ENCODE measurements at regions of chr7 and their contacts with region 1.

Region 1: GRCh38 chr7:152759949-152760853 is 649 bp downstream of the ACTR3B start:
- DNase-seq: peak; percentile 66
- H3K4me3 ChIP-seq: peak overlapping the region; percentile 90 to 98 (median 94)
- H3K27ac ChIP-seq: peak overlapping the region; percentile 88 to 96 (median 94)
- H3K4me1 ChIP-seq: peaks cover 0 to 16% (median 13%) of the 10 kb centered on the region in 4 donors
- H3K27me3 ChIP-seq: no peaks in the 10 kb centered on the region
- CTCF ChIP-seq: no peak
- EP300 ChIP-seq: no peak
- POLR2A ChIP-seq: no peak

Region 2: GRCh38 chr7:152025077-152025936 is 734.9 kb before region 1 on chr7 and contains the start of gene GALNT11:
- intact Hi-C with region 1: loop called (anchors 5 kb)
- DNase-seq: peak; percentile 93
- H3K4me3 ChIP-seq: peak within 1 kb of the TSS; percentile 63 to 86 (median 82)
- H3K27ac ChIP-seq: peak within 1 kb of the TSS; percentile 89 to 94 (median 92)
- H3K4me1 ChIP-seq: peaks cover 0 to 20% (median 13%) of the 10 kb centered on the region in 4 donors
- H3K27me3 ChIP-seq: no peaks in the 10 kb centered on the region
- CTCF ChIP-seq: peak in 1 of 4 experiments; percentile 28
- EP300 ChIP-seq: no peak
- POLR2A ChIP-seq: peak in 1 of 2 donors; percentile 23
- total RNA-seq, gene GALNT11: 35.7 to 48.2 (median 40.4) TPM

Measured in sigmoid colon (tissue), 7 donors.